T-cell (primary cell): ENCODE measurements at regions of chr3 and their contacts with region 1.

Region 1: GRCh38 chr3:143263852-143264513 is 144.4 kb downstream of the CHST2 start:
- DNase-seq: no peak
- ATAC-seq: no peak
- H3K4me3 ChIP-seq: no peak overlapping the region
- H3K4me3 Mint-ChIP-seq: no peak overlapping the region
- H3K27ac ChIP-seq: no peak overlapping the region
- H3K27ac Mint-ChIP-seq: no peak overlapping the region
- H3K4me1 ChIP-seq: no peaks in the 10 kb centered on the region
- H3K4me1 Mint-ChIP-seq: peaks cover 0 to 6% (median 4%) of the 10 kb centered on the region in 3 donors
- H3K27me3 ChIP-seq: no peaks in the 10 kb centered on the region
- H3K27me3 Mint-ChIP-seq: no peaks in the 10 kb centered on the region

Region 2: DNA sequence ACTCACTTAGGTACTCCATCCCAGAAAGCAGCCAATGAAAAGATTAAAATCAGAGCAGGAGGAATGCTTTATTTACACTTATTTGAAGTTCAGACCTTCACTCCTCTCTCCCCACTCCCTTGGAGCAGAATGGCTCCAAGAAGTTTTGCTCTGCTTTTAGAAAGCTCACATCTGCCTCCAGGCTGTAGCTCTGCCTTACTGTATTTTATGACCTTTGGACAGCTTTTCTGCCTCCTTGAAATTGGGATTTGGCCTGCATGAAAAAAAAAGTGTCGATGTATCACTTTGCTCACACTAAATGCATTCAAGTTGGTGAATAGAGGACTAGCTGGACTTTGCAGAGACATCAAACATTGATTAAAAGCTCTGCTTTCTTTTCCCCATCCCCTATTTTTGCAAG is 489.0 kb after region 1 on chr3:
- CTCF ChIA-PET with region 1: interaction called in 1 of 2 experiments, 15 read pairs
- POLR2A ChIA-PET with region 1: no interaction called
- DNase-seq: no peak
- ATAC-seq: no peak
- H3K4me3 ChIP-seq: no peak overlapping the region
- H3K4me3 Mint-ChIP-seq: peak overlapping the region in 1 of 3 donors; percentile 77
- H3K27ac ChIP-seq: peak overlapping the region; percentile 70
- H3K27ac Mint-ChIP-seq: peak overlapping the region; percentile 92 to 99
- H3K4me1 ChIP-seq: peaks cover 27 to 40% of the 10 kb centered on the region in 2 experiments
- H3K4me1 Mint-ChIP-seq: peaks cover 51 to 71% (median 62%) of the 10 kb centered on the region in 3 donors
- H3K27me3 ChIP-seq: no peaks in the 10 kb centered on the region
- H3K27me3 Mint-ChIP-seq: no peaks in the 10 kb centered on the region

Region 3: GRCh38 chr3:143849854-143850549 is 586.0 kb after region 1 on chr3:
- CTCF ChIA-PET with region 1: no interaction called
- POLR2A ChIA-PET with region 1: no interaction called
- DNase-seq: peak in 1 of 35 experiments; percentile 13
- ATAC-seq: peak in 2 of 4 experiments; percentile 27 to 34
- H3K4me3 ChIP-seq: no peak overlapping the region
- H3K4me3 Mint-ChIP-seq: peak overlapping the region; percentile 36 to 97 (median 92)
- H3K27ac ChIP-seq: peak overlapping the region; percentile 33
- H3K27ac Mint-ChIP-seq: peak overlapping the region; percentile 76 to 86
- H3K4me1 ChIP-seq: peaks cover 6 to 28% of the 10 kb centered on the region in 2 experiments
- H3K4me1 Mint-ChIP-seq: peaks cover 55 to 63% (median 57%) of the 10 kb centered on the region in 3 donors
- H3K27me3 ChIP-seq: no peaks in the 10 kb centered on the region
- H3K27me3 Mint-ChIP-seq: no peaks in the 10 kb centered on the region